H1 (cell line): ENCODE measurements at regions of chr15 and their contacts with region 1.

Region 1: GRCh38 chr15:43268111-43269105 is 1.7 kb upstream of the TGM5 start:
- DNase-seq: peak in 1 of 2 experiments; percentile 69
- H3K4me3 ChIP-seq: no peak overlapping the region
- H3K27ac ChIP-seq: no peak overlapping the region
- H3K4me1 ChIP-seq: no peaks in the 10 kb centered on the region
- H3K27me3 ChIP-seq: no peaks in the 10 kb centered on the region
- CTCF ChIP-seq: peak; percentile 63 to 72 (median 70)
- EP300 ChIP-seq: no peak
- POLR2A ChIP-seq: no peak
- RAD21 ChIP-seq: peak; percentile 78 to 82

Region 2: DNA sequence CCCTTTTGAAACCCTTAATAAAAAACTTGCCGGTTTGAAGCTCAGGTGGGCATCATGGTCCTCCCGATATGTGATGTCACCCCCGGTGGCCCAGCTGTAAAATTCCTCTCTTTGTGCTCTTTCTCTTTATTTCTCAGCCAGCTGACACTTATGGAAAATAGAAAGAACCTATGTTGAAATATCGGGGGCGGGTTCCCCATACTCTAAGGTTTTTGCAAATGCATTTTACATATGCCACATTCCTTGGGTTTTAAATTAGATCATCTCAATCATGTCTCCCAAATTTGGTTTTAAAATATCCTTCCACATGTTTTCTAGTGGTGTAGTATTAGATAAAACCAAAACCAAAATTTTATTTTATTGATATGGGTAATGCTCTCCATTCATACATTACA is 139.5 kb before region 1 on chr15:
- CTCF ChIA-PET with region 1: no interaction called
- POLR2A ChIA-PET with region 1: no interaction called
- DNase-seq: no peak
- H3K4me3 ChIP-seq: no peak overlapping the region
- H3K27ac ChIP-seq: no peak overlapping the region
- H3K4me1 ChIP-seq: 0 out of 7 replicates have a peak, but pooled peaks cover 0 to under 1% (median 0%) of the 10 kb centered on the region in 4 experiments
- H3K27me3 ChIP-seq: peaks cover 0 to 13% (median 7%) of the 10 kb centered on the region in 4 experiments; a peak in 5 of 7 replicates
- CTCF ChIP-seq: no peak
- EP300 ChIP-seq: no peak
- POLR2A ChIP-seq: no peak
- RAD21 ChIP-seq: no peak

Region 3: DNA sequence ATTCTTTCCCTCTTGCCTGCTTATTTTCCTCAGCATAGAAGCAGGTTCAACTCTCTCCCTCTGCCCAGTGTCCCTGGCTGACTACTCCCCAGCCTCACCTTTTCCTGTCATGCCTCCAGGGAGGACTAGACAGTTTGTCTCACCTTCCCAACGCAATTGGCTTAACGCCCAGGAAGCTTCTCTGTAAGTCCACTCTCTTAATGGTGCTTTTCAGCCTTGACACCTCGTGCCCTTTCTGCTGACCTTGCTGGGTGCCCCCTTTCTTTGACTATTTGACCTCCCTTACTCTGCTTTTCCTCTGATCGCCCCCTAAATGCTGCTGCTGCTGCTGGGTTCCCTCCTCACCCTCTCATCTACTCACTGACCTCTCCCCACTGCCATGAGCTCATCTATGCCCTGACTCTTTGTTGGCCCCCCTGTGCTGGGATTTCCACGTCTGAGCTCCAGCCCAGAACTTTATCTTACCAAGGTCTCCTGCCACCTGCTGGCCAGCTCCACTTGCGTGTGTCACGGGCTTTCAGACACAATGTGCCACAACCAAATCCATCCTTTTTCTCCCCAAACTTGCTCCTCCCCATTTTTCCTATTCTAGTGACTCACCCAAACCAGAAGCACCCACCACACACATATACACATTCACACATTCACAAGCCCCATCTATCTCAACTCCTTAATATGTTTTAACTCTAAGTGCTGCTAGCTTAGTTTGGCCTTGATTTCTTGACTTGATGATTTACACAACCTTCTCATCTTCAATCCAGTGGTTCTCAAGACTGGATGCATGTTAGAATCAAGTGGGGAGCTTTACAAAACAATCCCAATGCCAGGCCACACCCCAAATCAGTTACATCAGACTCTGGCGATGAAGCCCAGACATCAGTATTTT is 64.1 kb before region 1 on chr15:
- CTCF ChIA-PET with region 1: interaction called, 28 read pairs
- POLR2A ChIA-PET with region 1: no interaction called
- DNase-seq: peak; percentile 44 to 67
- H3K4me3 ChIP-seq: no peak overlapping the region
- H3K27ac ChIP-seq: no peak overlapping the region
- H3K4me1 ChIP-seq: peaks cover 0 to 3% (median 0%) of the 10 kb centered on the region in 4 experiments; a peak in 1 of 7 replicates
- H3K27me3 ChIP-seq: no peaks in the 10 kb centered on the region
- CTCF ChIP-seq: peak; percentile 75 to 84 (median 77)
- EP300 ChIP-seq: no peak
- POLR2A ChIP-seq: no peak
- RAD21 ChIP-seq: peak; percentile 40 to 62; a peak in 3 of 4 replicates

Region 4: DNA sequence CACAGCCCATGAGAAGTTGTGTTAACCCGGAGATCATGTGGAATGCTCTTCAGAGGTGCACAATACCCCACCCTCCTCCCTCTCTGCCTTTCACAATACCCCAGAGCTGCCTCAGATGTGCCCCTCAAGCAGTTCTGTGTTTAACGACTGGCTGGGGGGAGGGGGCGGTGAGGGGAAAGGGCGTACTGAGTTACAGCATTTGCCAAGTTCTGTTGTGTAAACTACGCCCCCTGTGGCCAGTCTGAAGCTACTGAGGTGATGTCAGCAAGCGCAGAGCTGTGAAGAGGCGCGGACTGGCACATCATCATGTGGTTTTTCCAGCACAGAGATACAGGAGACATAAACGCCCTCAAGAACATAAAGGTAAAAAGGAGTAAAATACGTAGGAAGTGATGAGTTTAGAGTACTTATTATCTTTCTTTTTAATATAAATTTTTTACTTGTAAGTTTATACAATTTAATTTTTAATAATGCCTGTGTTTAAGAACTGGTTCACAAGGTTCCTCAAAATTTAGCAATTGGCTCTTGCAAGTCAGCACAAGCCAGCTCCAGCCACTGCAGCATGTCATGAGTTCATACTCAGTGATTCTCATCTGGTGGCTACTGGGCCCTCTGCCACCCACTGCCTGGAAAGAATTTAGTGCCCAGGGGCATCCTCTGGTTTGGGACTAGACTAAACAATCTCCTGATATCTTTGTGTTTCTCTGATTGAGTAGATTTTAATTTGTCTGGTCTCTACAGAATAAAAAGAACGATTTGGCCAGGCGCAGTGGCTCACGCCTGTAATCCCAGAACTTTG is 49.3 kb before region 1 on chr15:
- CTCF ChIA-PET with region 1: interaction called, 82 read pairs
- POLR2A ChIA-PET with region 1: no interaction called
- DNase-seq: peak in 1 of 2 experiments; percentile 77
- H3K4me3 ChIP-seq: no peak overlapping the region
- H3K27ac ChIP-seq: no peak overlapping the region
- H3K4me1 ChIP-seq: peaks cover 0 to 3% (median 1%) of the 10 kb centered on the region in 4 experiments; a peak in 3 of 7 replicates
- H3K27me3 ChIP-seq: peaks cover 0 to 2% (median 0%) of the 10 kb centered on the region in 4 experiments; a peak in 2 of 7 replicates
- CTCF ChIP-seq: peak; percentile 75 to 80 (median 79)
- EP300 ChIP-seq: no peak
- POLR2A ChIP-seq: no peak
- RAD21 ChIP-seq: peak; percentile 38 to 54; a peak in 3 of 4 replicates

Region 5: GRCh38 chr15:43230640-43231115 is 37.7 kb before region 1 on chr15:
- CTCF ChIA-PET with region 1: interaction called, 82 read pairs
- POLR2A ChIA-PET with region 1: no interaction called
- DNase-seq: no peak
- H3K4me3 ChIP-seq: no peak overlapping the region
- H3K27ac ChIP-seq: no peak overlapping the region
- H3K4me1 ChIP-seq: no peaks in the 10 kb centered on the region
- H3K27me3 ChIP-seq: no peaks in the 10 kb centered on the region
- CTCF ChIP-seq: no peak
- EP300 ChIP-seq: no peak
- POLR2A ChIP-seq: no peak
- RAD21 ChIP-seq: no peak

Region 6: DNA sequence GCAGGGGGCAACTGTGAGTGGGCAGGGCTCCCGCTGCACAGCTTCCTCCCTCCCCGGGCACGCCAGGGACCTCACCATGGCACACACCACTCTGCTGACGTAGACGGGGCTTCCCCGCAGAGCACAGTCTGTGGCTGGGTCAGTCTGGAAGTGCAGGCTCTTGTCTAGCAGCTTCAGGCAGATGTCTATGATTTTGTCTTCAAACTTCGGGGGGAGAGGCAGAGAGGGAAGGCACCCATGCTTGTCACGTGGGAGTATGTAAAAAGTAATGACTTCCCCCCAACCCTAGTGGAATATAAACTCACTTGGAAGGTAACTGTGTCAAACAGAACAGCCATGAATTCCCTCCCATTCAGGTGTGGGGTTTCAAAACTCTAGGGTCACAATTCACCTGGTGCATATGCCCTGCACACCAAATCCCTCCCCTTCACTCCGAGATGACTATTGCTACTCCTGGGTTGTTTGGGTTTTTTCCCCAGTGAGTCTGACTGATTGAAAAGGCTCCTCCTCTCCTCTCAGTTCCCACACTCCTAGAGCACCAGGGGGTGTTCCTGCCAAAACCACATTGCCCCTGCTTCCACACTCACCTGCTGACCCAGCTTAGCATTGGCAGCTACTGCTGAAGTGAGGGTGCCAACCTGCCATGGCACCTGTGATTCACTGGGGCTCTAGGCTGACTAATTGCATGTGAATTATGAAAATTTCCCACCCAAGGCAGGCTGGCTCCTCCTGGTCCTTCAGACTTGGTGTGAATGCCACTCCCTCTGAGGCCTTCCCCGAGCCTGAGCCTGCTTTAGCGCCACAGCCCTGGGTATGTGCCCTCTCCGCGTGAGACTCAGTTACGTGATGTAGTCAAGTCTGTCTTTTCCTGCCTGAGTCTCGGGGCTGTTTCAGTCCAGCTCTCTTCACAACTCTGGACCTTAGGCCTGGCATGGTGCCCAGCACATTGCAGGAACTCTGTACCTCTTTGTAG is 14.7 kb before region 1 on chr15:
- CTCF ChIA-PET with region 1: interaction called, 17 read pairs
- POLR2A ChIA-PET with region 1: no interaction called
- DNase-seq: no peak
- H3K4me3 ChIP-seq: no peak overlapping the region
- H3K27ac ChIP-seq: no peak overlapping the region
- H3K4me1 ChIP-seq: no peaks in the 10 kb centered on the region
- H3K27me3 ChIP-seq: no peaks in the 10 kb centered on the region; a peak in 1 of 7 replicates
- CTCF ChIP-seq: no peak
- EP300 ChIP-seq: no peak
- POLR2A ChIP-seq: no peak
- RAD21 ChIP-seq: no peak